Sigmoid colon (tissue), 7 donors: ENCODE measurements at regions of chr15 and their contacts with region 1.

Region 1: DNA sequence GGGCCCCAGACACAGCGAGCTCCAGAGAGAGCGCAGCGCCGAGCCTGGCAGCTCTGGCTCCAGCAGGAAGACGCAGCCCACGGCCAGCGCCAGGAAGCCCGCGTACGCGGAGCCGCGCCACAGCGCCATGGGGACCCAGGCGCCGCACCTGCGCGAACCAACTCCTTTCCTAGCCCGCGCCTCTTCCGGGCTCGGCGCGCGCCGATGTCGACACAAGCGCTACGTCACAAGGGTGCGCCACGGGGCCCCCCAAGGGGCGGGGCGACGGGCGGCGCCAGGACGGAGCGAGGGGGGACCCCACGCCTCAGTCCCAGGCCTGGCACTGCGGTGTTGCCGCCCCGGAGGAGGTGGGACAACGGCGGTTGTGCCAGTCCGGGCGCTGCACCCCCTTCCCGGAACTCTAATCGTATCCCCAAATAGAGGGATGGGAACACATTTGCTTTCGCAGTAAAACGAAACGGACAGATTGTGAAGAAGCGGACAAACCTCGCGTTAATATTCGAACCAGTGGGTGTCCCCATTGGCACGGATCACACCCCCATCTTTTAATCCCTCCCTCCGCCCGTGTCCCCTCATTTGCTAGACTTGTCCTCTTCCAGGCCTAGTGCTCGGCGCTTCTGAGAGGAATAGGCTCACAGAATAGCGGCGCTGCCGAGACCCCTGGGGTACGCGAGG is at the start of gene ADPGK:
- DNase-seq: peak; percentile 96
- H3K4me3 ChIP-seq: peak within 1 kb of the TSS; percentile 82 to 93 (median 86)
- H3K27ac ChIP-seq: peak within 1 kb of the TSS; percentile 92 to 97 (median 94)
- H3K4me1 ChIP-seq: peaks cover 0 to 27% (median 20%) of the 10 kb centered on the region in 4 donors
- H3K27me3 ChIP-seq: no peaks in the 10 kb centered on the region
- CTCF ChIP-seq: no peak
- EP300 ChIP-seq: peak in 1 of 4 donors; percentile 74
- POLR2A ChIP-seq: peak; percentile 70 to 72
- total RNA-seq, gene ADPGK: 23.9 to 30.5 (median 27.2) TPM

Region 2: GRCh38 chr15:72117486-72118399 is 666.0 kb before region 1 on chr15 and contains the start of gene MYO9A:
- intact Hi-C with region 1: loop called (anchors 5 kb)
- DNase-seq: peak; percentile 98
- H3K4me3 ChIP-seq: peak within 1 kb of the TSS; percentile 71 to 93 (median 80)
- H3K27ac ChIP-seq: peak within 1 kb of the TSS; percentile 92 to 98 (median 94)
- H3K4me1 ChIP-seq: peaks cover 0 to 48% (median 39%) of the 10 kb centered on the region in 4 donors
- H3K27me3 ChIP-seq: no peaks in the 10 kb centered on the region
- CTCF ChIP-seq: no peak
- EP300 ChIP-seq: peak in 1 of 4 donors; percentile 10
- POLR2A ChIP-seq: peak in 1 of 2 donors; percentile 49
- total RNA-seq, gene MYO9A: 55.8 to 80.0 (median 62.8) TPM

Region 3: DNA sequence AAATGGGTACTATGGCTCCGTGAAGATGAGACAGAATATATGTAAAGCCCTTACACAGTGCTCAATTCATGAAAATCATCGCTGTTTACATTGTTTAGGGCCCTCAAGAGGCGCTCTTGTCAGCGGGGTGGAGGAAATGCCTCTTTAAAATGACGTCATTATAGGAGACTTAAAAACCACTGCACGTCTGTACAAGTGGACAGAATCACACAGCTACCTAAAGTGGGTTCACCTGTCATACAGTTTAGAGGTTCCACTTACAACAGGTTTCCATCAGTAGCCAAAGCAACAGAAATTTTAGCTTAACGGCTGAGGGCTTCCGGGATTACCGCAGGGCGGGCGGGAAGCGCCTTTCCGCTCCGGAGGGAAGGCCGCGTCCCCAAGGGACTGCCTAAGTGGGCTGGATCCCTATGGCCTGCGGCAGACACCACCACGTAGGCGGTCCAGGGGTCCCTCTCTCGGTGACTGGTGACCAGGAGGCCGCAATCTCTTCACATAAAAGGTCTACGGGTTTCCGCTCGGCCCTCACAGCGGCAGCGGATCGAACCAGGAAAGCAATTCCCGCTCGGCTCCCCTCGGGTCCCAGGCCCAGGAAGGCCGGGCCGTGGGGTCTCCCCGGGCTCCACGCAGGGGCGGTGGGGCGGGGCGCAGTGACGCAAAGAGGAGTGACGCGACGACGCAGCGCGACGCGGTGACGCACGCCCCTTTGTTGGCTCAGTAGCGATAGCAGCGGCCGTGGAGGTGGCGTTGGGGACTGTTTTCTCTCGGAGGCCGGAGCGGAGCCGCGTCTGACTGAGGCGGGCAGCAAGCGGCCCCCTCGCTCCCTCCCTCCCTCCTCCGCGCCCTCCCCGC is 309.9 kb before region 1 on chr15 and contains the start of gene ARIH1:
- intact Hi-C with region 1: loop called (anchors 5 kb)
- DNase-seq: peak; percentile 99
- H3K4me3 ChIP-seq: peak within 1 kb of the TSS; percentile 58 to 91 (median 84)
- H3K27ac ChIP-seq: peak within 1 kb of the TSS; percentile 99
- H3K4me1 ChIP-seq: peaks cover 0 to 46% (median 43%) of the 10 kb centered on the region in 4 donors
- H3K27me3 ChIP-seq: no peaks in the 10 kb centered on the region
- CTCF ChIP-seq: no peak
- EP300 ChIP-seq: peak in 2 of 4 donors; percentile 69 to 85
- POLR2A ChIP-seq: peak; percentile 98 to 99
- total RNA-seq, gene ARIH1: 36.4 to 69.5 (median 45.2) TPM

Region 4: DNA sequence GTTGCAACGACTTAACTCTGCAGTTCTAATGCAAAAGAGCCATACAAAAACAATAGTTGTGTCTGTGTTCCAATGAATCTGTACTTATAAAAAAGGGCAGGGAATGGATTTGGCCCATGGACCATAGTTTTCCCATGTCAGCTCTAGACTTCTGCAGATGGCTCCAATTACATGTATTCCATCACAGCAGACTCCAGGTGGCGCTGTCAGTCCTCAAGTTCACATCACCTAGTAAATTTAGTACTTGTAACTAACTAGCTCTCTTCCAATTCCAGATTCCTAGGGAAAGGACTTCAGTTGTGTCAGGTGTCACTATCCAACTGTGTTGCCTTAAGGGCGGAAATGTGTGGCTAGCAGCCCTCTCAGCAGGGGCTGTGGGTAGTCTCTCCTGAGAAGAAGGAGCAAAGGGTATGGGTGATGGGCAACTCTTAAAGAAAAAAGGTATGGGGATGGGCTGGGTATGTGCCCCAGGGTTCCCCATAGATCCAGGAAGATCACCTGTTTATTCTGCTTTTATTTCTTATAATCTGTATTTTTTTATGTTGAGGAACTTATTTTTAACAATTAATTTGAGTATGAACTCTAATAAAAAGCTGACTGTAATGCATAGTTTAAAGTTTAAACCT is 61.5 kb before region 1 on chr15:
- intact Hi-C with region 1: no loop called
- DNase-seq: no peak
- H3K4me3 ChIP-seq: no peak overlapping the region
- H3K27ac ChIP-seq: no peak overlapping the region
- H3K4me1 ChIP-seq: no peaks in the 10 kb centered on the region
- H3K27me3 ChIP-seq: no peaks in the 10 kb centered on the region
- CTCF ChIP-seq: peak in 2 of 4 experiments; percentile 40 to 53
- EP300 ChIP-seq: no peak
- POLR2A ChIP-seq: no peak

Region 5: DNA sequence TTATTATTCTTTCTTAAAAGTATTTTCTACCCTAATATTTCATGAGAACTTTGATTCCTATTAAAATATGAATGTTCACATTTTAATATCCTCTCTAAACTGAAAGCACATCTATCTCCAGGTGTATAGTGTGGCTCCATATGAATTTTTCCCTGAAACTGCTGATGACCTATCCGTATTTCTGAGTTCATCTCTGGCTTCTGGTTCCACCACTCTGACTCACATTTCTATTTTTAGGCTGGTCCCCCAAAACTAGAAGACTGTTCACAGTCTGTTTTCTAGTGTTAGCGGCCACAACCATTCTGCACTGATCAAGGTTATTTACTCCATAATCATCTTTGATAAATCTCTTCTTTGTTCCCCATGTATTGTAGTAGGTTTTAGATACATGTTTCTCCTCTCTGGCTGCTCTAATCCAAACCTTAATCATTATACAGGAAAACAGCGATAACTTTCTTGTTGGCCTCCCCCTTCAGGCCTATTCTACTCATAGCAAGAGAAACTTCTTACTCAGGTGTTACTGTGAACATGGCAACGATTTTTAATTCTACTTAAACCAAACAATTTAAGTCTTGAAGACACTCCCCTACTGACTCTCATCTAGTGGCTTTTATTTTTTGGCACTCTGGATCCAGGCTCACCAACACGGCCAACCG is 12.9 kb before region 1 on chr15:
- intact Hi-C with region 1: no loop called
- DNase-seq: no peak
- H3K4me3 ChIP-seq: no peak overlapping the region
- H3K27ac ChIP-seq: no peak overlapping the region
- H3K4me1 ChIP-seq: no peaks in the 10 kb centered on the region
- H3K27me3 ChIP-seq: no peaks in the 10 kb centered on the region
- CTCF ChIP-seq: no peak
- EP300 ChIP-seq: no peak
- POLR2A ChIP-seq: no peak

Region 6: DNA sequence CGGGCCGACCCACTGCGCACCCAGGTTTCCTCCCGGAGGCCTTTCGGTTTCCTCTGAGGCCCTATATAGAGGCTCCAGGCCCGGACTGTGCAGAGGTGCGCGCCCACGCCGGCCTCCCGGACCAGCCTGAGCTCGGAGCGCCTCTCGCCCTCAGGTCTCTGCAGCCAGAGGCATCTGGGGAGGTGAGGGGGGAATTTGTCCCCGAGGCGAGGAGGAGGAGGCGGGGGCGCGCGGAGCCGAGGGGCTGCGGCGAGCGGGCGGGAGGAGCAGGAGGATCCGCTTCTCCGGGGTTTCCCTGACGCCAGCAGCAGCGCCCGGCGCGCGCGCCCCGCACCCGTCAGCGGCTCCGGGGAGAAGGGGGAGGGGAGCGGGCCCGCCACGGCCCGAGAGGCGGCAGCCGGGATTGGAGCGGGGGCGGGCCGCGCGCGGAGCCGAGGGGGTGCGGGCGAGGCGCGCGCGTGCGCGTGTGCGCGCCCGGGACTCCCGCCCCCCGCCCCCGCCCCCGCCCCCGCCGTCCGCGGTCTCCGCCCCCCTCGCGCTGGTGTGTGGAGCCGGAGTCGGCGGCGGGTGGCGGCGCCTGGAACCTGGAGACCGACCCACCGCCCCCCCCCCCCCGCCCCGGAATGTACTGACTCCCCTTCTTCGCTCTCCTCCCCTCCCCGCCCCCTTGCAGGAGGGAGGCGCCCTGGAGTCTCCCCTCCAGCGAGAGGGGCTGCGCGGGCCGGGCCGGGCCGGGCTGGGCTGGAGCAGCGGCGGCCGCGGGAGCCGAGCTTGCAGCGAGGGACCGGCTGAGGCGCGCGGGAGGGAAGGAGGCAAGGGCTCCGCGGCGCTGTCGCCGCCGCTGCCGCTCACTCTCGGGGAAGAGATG is 268.3 kb after region 1 on chr15 and contains the start of gene NEO1:
- intact Hi-C with region 1: loop called (anchors 2 kb)
- DNase-seq: peak; percentile 94
- H3K4me3 ChIP-seq: peak within 1 kb of the TSS; percentile 85 to 93 (median 88)
- H3K27ac ChIP-seq: peak within 1 kb of the TSS; percentile 96 to 97 (median 96)
- H3K4me1 ChIP-seq: peaks cover 0 to 32% (median 15%) of the 10 kb centered on the region in 4 donors
- H3K27me3 ChIP-seq: no peaks in the 10 kb centered on the region
- CTCF ChIP-seq: no peak
- EP300 ChIP-seq: no peak
- POLR2A ChIP-seq: peak; percentile 26 to 48
- total RNA-seq, gene NEO1: 19.3 to 42.1 (median 26.8) TPM

Region 7: DNA sequence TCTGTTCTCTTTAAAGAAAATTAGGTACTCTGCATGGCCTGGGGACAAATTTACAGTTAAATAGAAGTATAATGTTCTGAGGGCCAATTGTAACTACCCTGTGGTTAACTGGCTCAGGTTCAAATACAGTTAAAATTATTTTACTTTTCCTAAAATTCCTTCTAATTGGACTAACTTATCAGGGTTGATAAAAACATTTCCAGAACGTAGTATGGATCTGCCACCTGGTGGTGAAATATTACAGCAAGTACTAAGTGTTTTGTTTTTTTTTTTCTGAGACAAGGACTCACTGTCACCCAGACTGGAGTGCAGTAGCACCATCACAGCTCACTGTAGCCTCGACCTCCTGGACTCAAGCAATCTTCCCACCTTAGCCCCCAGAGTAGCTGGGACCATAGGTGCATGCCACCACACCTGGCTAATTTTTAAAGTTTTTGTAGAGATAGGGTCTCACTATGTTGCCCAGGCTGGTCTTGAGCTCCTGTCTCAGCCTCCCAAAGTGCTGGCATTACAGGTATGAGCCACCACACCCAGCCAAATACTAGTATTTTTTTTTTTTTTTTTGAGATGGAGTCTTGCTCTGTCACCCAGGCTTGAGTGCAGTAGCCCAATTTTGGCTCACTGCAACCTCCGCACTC is 297.7 kb after region 1 on chr15:
- intact Hi-C with region 1: loop called (anchors 2 kb)
- DNase-seq: no peak
- H3K4me3 ChIP-seq: no peak overlapping the region
- H3K27ac ChIP-seq: no peak overlapping the region
- H3K4me1 ChIP-seq: peaks cover 0 to 36% (median 22%) of the 10 kb centered on the region in 4 donors
- H3K27me3 ChIP-seq: no peaks in the 10 kb centered on the region
- CTCF ChIP-seq: peak; percentile 45 to 64 (median 54)
- EP300 ChIP-seq: no peak
- POLR2A ChIP-seq: no peak

Region 8: GRCh38 chr15:73273181-73274002 is 489.7 kb after region 1 on chr15:
- intact Hi-C with region 1: loop called (anchors 5 kb)
- DNase-seq: peak; percentile 71
- H3K4me3 ChIP-seq: no peak overlapping the region
- H3K27ac ChIP-seq: no peak overlapping the region
- H3K4me1 ChIP-seq: peaks cover 0 to 8% (median 3%) of the 10 kb centered on the region in 4 donors
- H3K27me3 ChIP-seq: no peaks in the 10 kb centered on the region
- CTCF ChIP-seq: peak; percentile 21 to 79 (median 64)
- EP300 ChIP-seq: no peak
- POLR2A ChIP-seq: no peak